HepG2 (cell line): ENCODE measurements at regions of chr17 and their contacts with region 1.

Region 1: DNA sequence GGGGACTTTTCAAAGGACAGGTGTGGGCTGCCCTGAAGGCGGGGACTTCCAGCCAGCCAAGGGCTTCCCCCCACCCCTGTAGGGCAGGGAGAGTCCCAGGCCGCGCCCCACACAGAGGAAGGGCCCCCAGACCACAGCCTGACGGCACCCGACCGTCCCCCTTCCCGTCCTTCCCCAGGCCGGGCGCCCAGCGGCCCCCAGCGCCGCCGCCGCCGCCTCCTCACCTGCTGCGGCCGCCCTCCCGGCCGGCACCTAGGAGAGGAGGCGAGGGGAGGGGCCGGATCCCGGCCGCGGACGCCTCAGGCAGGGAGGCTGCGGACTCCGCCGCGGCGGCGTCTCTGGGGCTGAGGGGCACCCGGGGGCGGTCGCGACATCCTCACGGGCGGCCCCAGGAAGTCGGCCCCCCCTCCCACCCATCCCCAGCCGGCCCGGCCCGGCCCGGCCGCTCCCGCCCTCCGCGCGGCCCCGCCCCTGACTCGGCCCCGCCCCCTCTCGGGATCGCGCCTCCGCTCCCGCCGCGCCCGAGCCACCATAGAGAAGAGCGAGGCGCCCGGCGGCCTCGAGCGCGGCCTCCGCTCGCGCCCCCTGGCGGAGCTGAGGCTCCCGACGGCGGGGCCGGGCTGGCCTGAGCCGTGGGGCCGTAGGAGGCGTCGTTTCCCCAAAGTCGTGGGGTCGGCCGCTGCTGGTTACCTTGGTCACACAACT is 25.5 kb upstream of the RFFL start:
- DNase-seq: peak; percentile 64
- ATAC-seq: peak; percentile 85
- H3K4me3 ChIP-seq: peak overlapping the region; percentile 71 to 92 (median 72)
- H3K27ac ChIP-seq: peak overlapping the region; percentile 83
- H3K4me1 ChIP-seq: peaks cover 43% of the 10 kb centered on the region
- H3K27me3 ChIP-seq: no peaks in the 10 kb centered on the region
- CTCF ChIP-seq: peak; percentile 83
- EP300 ChIP-seq: no peak
- POLR2A ChIP-seq: peak in 1 of 2 experiments; percentile 62; a peak in 1 of 4 replicates
- RAD21 ChIP-seq: peak; percentile 93

Region 2: DNA sequence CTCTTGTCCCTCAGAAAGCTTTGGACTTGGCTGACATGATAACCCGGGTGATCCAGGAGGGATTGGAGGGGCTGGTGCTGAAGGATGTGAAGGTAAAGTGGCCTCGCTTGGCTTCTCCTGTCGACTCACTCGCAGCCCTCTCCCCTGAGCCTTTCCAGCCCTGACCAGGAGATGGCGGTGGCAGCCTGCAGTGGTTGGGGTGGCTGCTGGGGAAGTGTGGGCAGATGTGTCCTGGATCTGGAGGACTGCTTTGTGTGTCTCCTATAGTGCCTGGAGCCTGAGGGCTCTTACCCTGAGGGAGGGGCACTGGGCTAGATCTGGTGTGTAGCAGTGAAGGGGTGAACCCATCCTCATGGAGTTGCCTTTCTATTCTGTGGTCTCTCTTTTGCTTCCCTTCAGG is 90.8 kb before region 1 on chr17:
- CTCF ChIA-PET with region 1: interaction called, 21 read pairs
- POLR2A ChIA-PET with region 1: no interaction called
- in situ Hi-C with region 1: no loop called
- intact Hi-C with region 1: loop called (anchors 1 kb)
- DNase-seq: peak; percentile 56
- ATAC-seq: peak; percentile 87
- H3K4me3 ChIP-seq: no peak overlapping the region
- H3K27ac ChIP-seq: no peak overlapping the region
- H3K4me1 ChIP-seq: no peaks in the 10 kb centered on the region
- H3K27me3 ChIP-seq: no peaks in the 10 kb centered on the region
- CTCF ChIP-seq: peak; percentile 97
- EP300 ChIP-seq: no peak
- POLR2A ChIP-seq: no peak
- RAD21 ChIP-seq: peak; percentile 90

Region 3: DNA sequence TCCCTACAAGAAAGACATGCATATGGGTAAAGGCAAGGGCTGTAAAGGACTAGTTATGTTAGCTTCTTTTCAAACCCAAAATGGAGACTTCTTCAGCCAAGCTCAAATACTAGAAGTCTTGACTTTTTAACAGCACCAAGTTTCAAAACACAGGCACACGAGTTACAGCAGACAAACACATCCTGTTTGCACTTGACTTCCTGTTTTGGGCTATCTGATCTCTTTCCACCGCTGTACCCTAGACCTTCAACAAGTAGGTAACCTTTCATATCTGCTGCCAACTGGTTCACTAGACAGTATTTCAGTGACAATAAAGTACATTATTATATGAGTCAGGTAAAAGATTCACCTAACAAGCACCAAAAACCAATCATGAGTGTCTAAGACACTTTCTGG is 37.9 kb before region 1 on chr17:
- CTCF ChIA-PET with region 1: no interaction called
- POLR2A ChIA-PET with region 1: interaction called, 11 read pairs
- in situ Hi-C with region 1: no loop called
- intact Hi-C with region 1: loop called (anchors 1 kb)
- DNase-seq: peak; percentile 81
- ATAC-seq: peak; percentile 79
- H3K4me3 ChIP-seq: peak overlapping the region; percentile 19 to 54 (median 50); a peak in 5 of 6 replicates
- H3K27ac ChIP-seq: peak overlapping the region; percentile 93
- H3K4me1 ChIP-seq: peaks cover 93% of the 10 kb centered on the region
- H3K27me3 ChIP-seq: no peaks in the 10 kb centered on the region; a peak in 1 of 5 replicates
- CTCF ChIP-seq: no peak
- EP300 ChIP-seq: peak in 1 of 2 experiments; percentile 60; a peak in 2 of 4 replicates
- POLR2A ChIP-seq: no peak
- RAD21 ChIP-seq: no peak

Region 4: DNA sequence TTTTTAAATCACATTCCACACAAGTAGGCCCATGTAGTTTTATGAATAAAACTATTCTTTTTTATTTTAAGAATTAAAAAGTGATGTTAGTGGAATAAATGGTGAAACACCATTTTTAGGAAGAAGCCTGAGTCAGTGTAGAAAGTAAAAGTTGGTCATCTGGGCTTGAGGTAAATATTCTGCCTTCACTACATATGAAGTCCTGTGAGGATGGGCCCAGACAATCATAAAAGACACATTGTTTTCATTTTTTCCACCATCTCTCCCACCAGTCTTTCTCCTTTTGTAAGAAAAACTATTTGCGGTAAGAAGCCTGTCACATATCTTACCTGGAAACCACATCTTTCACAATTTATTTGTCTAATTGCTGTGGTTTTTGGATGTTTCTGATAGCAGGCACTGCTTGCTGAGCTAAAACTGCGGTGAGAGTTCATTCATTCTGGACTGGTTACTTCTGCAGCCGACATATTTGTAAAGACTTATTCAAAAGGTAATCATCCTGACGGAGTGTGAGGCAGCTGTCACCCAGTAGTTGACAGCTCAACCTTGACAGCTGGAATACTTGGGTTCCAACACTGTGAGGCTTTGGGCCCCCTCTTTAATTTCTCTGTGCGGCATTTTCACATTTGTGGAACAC is 14.9 kb before region 1 on chr17:
- CTCF ChIA-PET with region 1: no interaction called
- POLR2A ChIA-PET with region 1: interaction called, 26 read pairs
- in situ Hi-C with region 1: no loop called
- intact Hi-C with region 1: no loop called
- DNase-seq: peak; percentile 69
- ATAC-seq: peak; percentile 64
- H3K4me3 ChIP-seq: peak overlapping the region in 2 of 3 experiments; percentile 43 to 56; a peak in 2 of 6 replicates
- H3K27ac ChIP-seq: peak overlapping the region; percentile 81
- H3K4me1 ChIP-seq: peaks cover 90% of the 10 kb centered on the region
- H3K27me3 ChIP-seq: no peaks in the 10 kb centered on the region; a peak in 1 of 5 replicates
- CTCF ChIP-seq: no peak
- EP300 ChIP-seq: peak in 1 of 2 experiments; percentile 27; a peak in 1 of 4 replicates
- POLR2A ChIP-seq: no peak
- RAD21 ChIP-seq: no peak